A673 (cell line): ENCODE measurements at regions of chr17 and their contacts with region 1.

Region 1: DNA sequence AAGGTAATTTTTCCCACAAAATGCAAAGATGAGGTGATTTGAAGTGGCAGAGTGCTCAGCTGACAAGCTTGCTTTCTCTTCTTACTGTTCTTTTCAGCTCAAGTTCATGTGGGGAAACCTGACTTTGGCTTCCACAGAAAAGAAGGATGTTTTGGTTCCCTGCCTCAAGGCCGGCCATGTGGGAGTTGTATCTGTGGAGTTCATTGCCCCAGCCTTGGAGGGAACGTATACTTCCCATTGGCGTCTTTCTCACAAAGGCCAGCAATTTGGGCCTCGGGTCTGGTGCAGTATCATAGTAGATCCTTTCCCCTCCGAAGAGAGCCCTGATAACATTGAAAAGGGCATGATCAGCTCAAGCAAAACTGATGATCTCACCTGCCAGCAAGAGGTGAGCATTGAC is 18.4 kb upstream of the TMEM106A start:
- DNase-seq: no peak
- H3K4me3 ChIP-seq: no peak overlapping the region
- H3K27ac ChIP-seq: no peak overlapping the region
- H3K4me1 ChIP-seq: no peaks in the 10 kb centered on the region
- H3K27me3 ChIP-seq: no peaks in the 10 kb centered on the region
- CTCF ChIP-seq: no peak

Region 2: DNA sequence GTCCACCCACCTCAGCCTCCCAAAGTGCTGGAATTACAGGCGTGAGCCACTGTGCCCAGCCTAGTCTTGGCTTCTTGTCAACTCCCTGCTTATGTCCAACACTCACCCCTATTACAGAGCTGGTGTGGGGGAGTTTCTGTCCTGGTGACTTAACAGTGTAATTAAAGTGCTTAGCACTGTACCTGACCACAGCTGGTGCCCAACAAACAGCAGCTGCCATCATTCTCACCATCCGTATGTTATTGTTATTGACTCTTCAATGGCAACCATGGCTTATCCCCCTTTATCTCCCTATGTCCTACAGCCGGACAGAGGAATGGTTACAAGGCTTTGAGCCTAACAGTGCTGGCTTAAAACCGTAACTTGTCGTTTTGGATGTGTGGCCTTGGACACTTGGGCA is 51.1 kb before region 1 on chr17:
- CTCF ChIA-PET with region 1: no interaction called
- POLR2A ChIA-PET with region 1: no interaction called
- intact Hi-C with region 1: no loop called
- DNase-seq: no peak
- H3K4me3 ChIP-seq: no peak overlapping the region
- H3K27ac ChIP-seq: no peak overlapping the region
- H3K4me1 ChIP-seq: no peaks in the 10 kb centered on the region
- H3K27me3 ChIP-seq: no peaks in the 10 kb centered on the region
- CTCF ChIP-seq: no peak

Region 3: GRCh38 chr17:43175816-43176570 is 17.3 kb before region 1 on chr17:
- CTCF ChIA-PET with region 1: no interaction called
- POLR2A ChIA-PET with region 1: interaction called, 11 read pairs
- intact Hi-C with region 1: no loop called
- DNase-seq: no peak
- H3K4me3 ChIP-seq: no peak overlapping the region
- H3K27ac ChIP-seq: no peak overlapping the region
- H3K4me1 ChIP-seq: peaks cover 9% of the 10 kb centered on the region
- H3K27me3 ChIP-seq: no peaks in the 10 kb centered on the region
- CTCF ChIP-seq: no peak